ENCODE measurements at regions of chr1 and their contacts with region 1.

Region 1: DNA sequence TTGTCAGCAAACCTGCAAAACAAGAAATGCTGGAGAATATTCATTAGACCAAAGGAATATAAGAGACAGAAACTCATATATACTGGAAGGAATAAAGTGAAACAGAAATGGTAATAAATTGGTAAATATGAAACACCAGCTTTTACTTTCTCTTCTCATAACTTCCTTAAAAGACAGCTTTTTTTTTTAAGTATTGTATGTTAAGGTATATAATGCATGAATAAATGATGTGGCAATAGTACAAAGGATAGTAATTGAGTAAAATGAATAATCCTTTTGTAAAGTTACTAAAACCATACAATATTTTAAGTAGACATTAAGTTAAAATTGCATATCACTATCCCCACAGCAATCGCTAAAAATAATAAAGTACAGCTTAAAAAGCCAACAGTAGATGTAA is 64.8 kb downstream of the TRIM33 start:
- H3K4me3 Mint-ChIP-seq: no peak overlapping the region
- H3K27ac Mint-ChIP-seq: no peak overlapping the region
- H3K4me1 Mint-ChIP-seq: no peaks in the 10 kb centered on the region
- H3K27me3 Mint-ChIP-seq: no peaks in the 10 kb centered on the region

Region 2: DNA sequence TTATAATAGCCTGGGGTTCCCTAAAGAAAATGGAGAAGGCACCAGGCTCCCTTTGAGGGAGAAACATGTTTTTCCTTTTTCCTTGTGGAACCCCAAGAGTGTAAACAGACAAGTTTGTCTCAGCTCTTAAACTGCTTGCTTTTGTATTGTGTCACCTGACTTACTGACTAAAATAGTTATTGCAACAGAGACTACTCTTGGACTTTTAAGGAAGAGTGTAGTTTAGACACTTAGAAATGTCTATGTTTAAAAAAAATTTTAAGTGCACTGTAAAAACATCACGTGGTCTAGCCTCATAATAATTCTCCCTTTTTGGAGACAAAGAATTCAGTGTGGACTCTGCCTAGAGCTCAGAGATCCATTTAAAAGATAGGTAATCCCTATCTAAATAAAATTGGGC is 76.3 kb before region 1 on chr1:
- intact Hi-C with region 1: no loop called
- H3K4me3 Mint-ChIP-seq: no peak overlapping the region
- H3K27ac Mint-ChIP-seq: peak overlapping the region; percentile 73
- H3K4me1 Mint-ChIP-seq: peaks cover 17% of the 10 kb centered on the region
- H3K27me3 Mint-ChIP-seq: no peaks in the 10 kb centered on the region

Region 3: GRCh38 chr1:114389714-114390113 is 56.5 kb before region 1 on chr1:
- intact Hi-C with region 1: no loop called
- H3K4me3 Mint-ChIP-seq: no peak overlapping the region
- H3K27ac Mint-ChIP-seq: no peak overlapping the region
- H3K4me1 Mint-ChIP-seq: no peaks in the 10 kb centered on the region
- H3K27me3 Mint-ChIP-seq: no peaks in the 10 kb centered on the region

Region 4: GRCh38 chr1:114558544-114558943 is 112.3 kb after region 1 on chr1:
- intact Hi-C with region 1: loop called (anchors 10 kb)
- H3K4me3 Mint-ChIP-seq: no peak overlapping the region
- H3K27ac Mint-ChIP-seq: no peak overlapping the region
- H3K4me1 Mint-ChIP-seq: peaks cover 5% of the 10 kb centered on the region
- H3K27me3 Mint-ChIP-seq: no peaks in the 10 kb centered on the region

Region 5: DNA sequence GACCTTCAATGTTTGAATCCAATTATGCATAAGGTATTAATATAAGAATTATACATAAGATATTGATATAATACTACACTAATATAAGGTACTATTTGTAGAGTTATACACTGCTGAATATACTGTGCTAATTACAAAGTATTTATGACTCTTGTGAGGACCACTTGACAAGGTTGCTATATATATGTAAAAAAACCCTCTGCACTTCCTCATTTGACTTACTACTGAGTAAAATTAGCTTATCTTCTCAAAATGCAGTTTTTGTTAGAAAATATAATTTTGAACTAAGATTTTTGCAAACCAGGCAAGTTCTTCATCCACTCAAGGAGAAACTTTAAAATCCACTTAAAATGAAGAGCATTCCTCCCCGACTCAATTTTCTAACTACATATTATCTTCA is 325.8 kb after region 1 on chr1:
- intact Hi-C with region 1: no loop called
- H3K4me3 Mint-ChIP-seq: no peak overlapping the region
- H3K27ac Mint-ChIP-seq: no peak overlapping the region
- H3K4me1 Mint-ChIP-seq: no peaks in the 10 kb centered on the region
- H3K27me3 Mint-ChIP-seq: no peaks in the 10 kb centered on the region

Region 6: GRCh38 chr1:114892194-114892918 is 446.2 kb after region 1 on chr1:
- intact Hi-C with region 1: no loop called
- H3K4me3 Mint-ChIP-seq: no peak overlapping the region
- H3K27ac Mint-ChIP-seq: no peak overlapping the region
- H3K4me1 Mint-ChIP-seq: no peaks in the 10 kb centered on the region
- H3K27me3 Mint-ChIP-seq: peaks cover 2% of the 10 kb centered on the region

Measured in dendritic cell treated with granulocyte-macrophage colony-stimulating factor and Interleukin-4, amounts not matched to agents 40 ng/mL and 50 ng/mL, for 4 days (primary cell).